Naive thymus-derived CD4-positive, alpha-beta T cell (primary cell): ENCODE measurements at regions of chr3 and their contacts with region 1.

Region 1: DNA sequence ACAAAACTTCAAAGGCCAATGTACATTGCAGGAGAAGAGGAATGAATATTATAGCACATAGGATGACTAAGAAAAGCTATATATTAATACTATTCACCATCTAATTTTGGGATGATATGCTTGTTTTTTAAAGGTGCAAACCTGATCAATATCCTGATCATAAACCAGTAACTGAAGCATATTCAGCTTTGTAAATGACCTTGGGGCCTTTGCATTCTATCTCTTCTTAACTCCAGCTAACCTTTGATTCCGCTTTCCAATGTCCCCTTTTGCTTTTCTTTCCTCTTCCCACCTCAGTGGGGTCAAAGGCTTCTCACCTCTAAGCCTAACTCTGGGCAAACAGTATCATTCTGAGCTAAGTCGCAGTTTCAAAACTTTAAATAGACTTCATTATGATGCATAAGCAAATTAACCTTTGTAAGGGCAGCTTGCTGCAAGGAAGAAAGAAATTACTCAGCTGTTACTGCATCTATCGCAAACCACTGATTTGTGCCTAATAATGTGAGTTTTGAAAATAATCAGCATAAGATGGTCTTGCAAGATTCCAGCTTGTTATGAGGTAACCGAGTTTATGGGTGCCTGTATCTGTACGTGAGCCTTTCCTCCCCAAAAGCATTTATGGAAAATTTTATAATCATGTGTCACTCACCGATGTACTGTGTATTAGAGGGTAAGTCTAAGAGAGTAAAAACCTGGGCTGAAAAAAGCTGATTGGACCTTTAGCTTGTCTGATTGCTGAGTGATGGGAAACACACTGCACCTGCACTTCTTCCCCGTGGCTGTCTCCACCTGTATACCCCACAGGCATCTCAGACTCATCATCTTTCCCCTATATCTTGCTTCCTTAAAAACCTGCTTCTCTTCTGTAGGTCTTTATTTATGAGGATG is 116.8 kb downstream of the TPRG1 start:
- DNase-seq: no peak
- ATAC-seq: no peak
- H3K4me3 ChIP-seq: no peak overlapping the region
- H3K4me3 Mint-ChIP-seq: peak overlapping the region in 5 of 10 donors; percentile 0 to 19 (median 12)
- H3K27ac ChIP-seq: no peak overlapping the region
- H3K27ac Mint-ChIP-seq: peak overlapping the region in 7 of 9 donors; percentile 3 to 53 (median 14)
- H3K4me1 ChIP-seq: peaks cover 6 to 22% of the 10 kb centered on the region in 2 donors
- H3K4me1 Mint-ChIP-seq: peaks cover 14 to 46% (median 36%) of the 10 kb centered on the region in 7 donors
- H3K27me3 ChIP-seq: no peaks in the 10 kb centered on the region
- H3K27me3 Mint-ChIP-seq: no peaks in the 10 kb centered on the region

Region 2: GRCh38 chr3:188526057-188526456 is 762.5 kb before region 1 on chr3:
- CTCF ChIA-PET with region 1: no interaction called
- POLR2A ChIA-PET with region 1: no interaction called
- intact Hi-C with region 1: no loop called
- DNase-seq: no peak
- ATAC-seq: no peak
- H3K4me3 ChIP-seq: no peak overlapping the region
- H3K4me3 Mint-ChIP-seq: no peak overlapping the region
- H3K27ac ChIP-seq: no peak overlapping the region
- H3K27ac Mint-ChIP-seq: no peak overlapping the region
- H3K4me1 ChIP-seq: no peaks in the 10 kb centered on the region
- H3K4me1 Mint-ChIP-seq: peaks cover 0 to 3% (median 0%) of the 10 kb centered on the region in 7 donors
- H3K27me3 ChIP-seq: no peaks in the 10 kb centered on the region
- H3K27me3 Mint-ChIP-seq: no peaks in the 10 kb centered on the region

Region 3: GRCh38 chr3:188875413-188875812 is 413.2 kb before region 1 on chr3:
- CTCF ChIA-PET with region 1: no interaction called
- POLR2A ChIA-PET with region 1: no interaction called
- intact Hi-C with region 1: no loop called
- DNase-seq: no peak
- ATAC-seq: no peak
- H3K4me3 ChIP-seq: no peak overlapping the region
- H3K4me3 Mint-ChIP-seq: no peak overlapping the region
- H3K27ac ChIP-seq: no peak overlapping the region
- H3K27ac Mint-ChIP-seq: no peak overlapping the region
- H3K4me1 ChIP-seq: no peaks in the 10 kb centered on the region
- H3K4me1 Mint-ChIP-seq: no peaks in the 10 kb centered on the region
- H3K27me3 ChIP-seq: no peaks in the 10 kb centered on the region
- H3K27me3 Mint-ChIP-seq: no peaks in the 10 kb centered on the region

Region 4: GRCh38 chr3:189304446-189305351 is 16.1 kb after region 1 on chr3:
- CTCF ChIA-PET with region 1: interaction called, 4 read pairs
- POLR2A ChIA-PET with region 1: interaction called, 5 read pairs
- intact Hi-C with region 1: loop called (anchors 1 to 2 kb)
- DNase-seq: peak in 5 of 9 donors; percentile 16 to 42 (median 28)
- ATAC-seq: no peak
- H3K4me3 ChIP-seq: no peak overlapping the region
- H3K4me3 Mint-ChIP-seq: peak overlapping the region; percentile 27 to 77 (median 64)
- H3K27ac ChIP-seq: no peak overlapping the region
- H3K27ac Mint-ChIP-seq: peak overlapping the region; percentile 44 to 93 (median 86)
- H3K4me1 ChIP-seq: peaks cover 0 to 19% of the 10 kb centered on the region in 2 donors
- H3K4me1 Mint-ChIP-seq: peaks cover 15 to 68% (median 57%) of the 10 kb centered on the region in 7 donors
- H3K27me3 ChIP-seq: no peaks in the 10 kb centered on the region
- H3K27me3 Mint-ChIP-seq: no peaks in the 10 kb centered on the region